ENCODE measurements at regions of chr7 and their contacts with region 1.

Region 1: DNA sequence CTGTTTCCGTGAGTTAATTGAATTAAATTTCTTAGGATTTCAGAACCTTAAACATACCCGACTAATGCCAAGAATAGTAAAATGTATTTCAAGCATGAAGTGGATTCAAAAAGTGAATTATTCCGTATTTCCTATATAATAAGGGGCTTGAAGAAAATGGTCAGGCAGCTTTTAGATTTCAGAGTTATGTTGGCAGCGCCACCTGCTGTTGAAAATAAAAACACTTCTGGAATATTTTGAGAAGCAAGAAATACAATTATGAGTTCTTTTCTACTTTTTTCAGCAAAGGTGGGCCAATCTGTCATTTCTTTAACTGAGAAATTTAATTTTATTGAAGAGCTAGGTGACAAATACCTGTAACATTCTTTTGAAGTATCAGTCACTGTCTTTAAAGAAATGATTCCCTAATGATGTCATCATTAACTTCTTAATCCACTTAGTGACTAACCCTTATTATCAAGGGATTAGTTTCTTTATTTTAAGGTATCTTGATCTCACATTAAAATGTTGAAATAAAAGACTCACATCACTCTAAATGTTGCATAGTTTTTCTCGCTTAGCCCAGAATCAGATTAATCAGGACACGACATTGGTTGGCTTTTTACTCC is 36.6 kb upstream of the AGR3 start:
- DNase-seq: peak in 1 of 2 experiments; percentile 45
- H3K4me3 ChIP-seq: no peak overlapping the region
- H3K27ac ChIP-seq: no peak overlapping the region
- H3K4me1 ChIP-seq: peaks cover 86% of the 10 kb centered on the region
- H3K27me3 ChIP-seq: no peaks in the 10 kb centered on the region
- CTCF ChIP-seq: peak; percentile 96

Region 2: DNA sequence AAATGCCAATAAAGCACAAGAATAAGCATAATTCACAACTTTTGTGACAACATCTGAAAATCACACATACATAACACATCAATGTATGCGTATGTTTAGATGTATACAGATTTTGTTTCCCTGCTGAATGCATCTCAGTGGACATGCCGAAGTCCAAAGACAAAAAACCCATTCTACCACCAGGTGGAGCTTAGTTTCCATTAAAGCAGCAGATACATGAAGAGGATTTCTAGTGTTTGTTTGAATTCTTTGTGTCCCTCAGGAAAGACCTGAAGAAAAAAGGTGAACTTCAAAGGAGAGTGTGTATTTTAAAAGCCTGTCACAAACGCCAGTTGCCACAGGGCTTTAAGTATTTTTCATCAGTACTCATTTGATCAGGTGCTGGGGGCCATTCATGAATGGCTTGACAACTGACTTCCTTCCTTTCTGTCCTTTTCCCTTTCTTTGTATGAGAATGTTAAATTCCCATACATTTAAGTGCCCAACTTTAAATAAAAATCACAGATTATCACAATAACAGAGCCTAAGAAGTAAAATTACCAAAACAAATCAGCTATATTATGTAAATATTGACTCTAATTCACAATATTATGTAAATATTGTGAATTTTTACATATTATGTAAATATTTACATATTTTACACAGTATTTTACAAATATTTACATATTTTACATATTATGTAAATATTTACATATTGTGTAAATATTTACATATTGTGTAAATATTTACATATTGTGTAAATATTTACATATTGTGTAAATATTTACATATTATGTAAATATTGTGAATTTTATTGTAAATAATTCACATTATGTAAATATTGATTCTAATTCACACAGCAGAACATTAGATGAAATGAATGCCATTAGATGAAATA is 840.1 kb before region 1 on chr7:
- CTCF ChIA-PET with region 1: no interaction called
- POLR2A ChIA-PET with region 1: no interaction called
- intact Hi-C with region 1: loop called (anchors 5 kb)
- DNase-seq: peak; percentile 55 to 69
- H3K4me3 ChIP-seq: no peak overlapping the region
- H3K27ac ChIP-seq: no peak overlapping the region
- H3K4me1 ChIP-seq: no peaks in the 10 kb centered on the region
- H3K27me3 ChIP-seq: no peaks in the 10 kb centered on the region
- CTCF ChIP-seq: peak; percentile 93

Region 3: GRCh38 chr7:16223963-16224707 is 694.3 kb before region 1 on chr7:
- CTCF ChIA-PET with region 1: no interaction called
- POLR2A ChIA-PET with region 1: no interaction called
- intact Hi-C with region 1: no loop called
- DNase-seq: no peak
- H3K4me3 ChIP-seq: no peak overlapping the region
- H3K27ac ChIP-seq: no peak overlapping the region
- H3K4me1 ChIP-seq: no peaks in the 10 kb centered on the region
- H3K27me3 ChIP-seq: no peaks in the 10 kb centered on the region
- CTCF ChIP-seq: no peak

Region 4: GRCh38 chr7:16695621-16696237 is 222.7 kb before region 1 on chr7:
- CTCF ChIA-PET with region 1: interaction called, 4 read pairs
- POLR2A ChIA-PET with region 1: no interaction called
- intact Hi-C with region 1: loop called (anchors 1 kb)
- DNase-seq: peak; percentile 37 to 63
- H3K4me3 ChIP-seq: no peak overlapping the region
- H3K27ac ChIP-seq: no peak overlapping the region
- H3K4me1 ChIP-seq: no peaks in the 10 kb centered on the region
- H3K27me3 ChIP-seq: no peaks in the 10 kb centered on the region
- CTCF ChIP-seq: peak; percentile 89

Region 5: GRCh38 chr7:16822029-16822428 is 96.4 kb before region 1 on chr7:
- CTCF ChIA-PET with region 1: no interaction called
- POLR2A ChIA-PET with region 1: no interaction called
- intact Hi-C with region 1: no loop called
- DNase-seq: no peak
- H3K4me3 ChIP-seq: no peak overlapping the region
- H3K27ac ChIP-seq: no peak overlapping the region
- H3K4me1 ChIP-seq: peaks cover 13% of the 10 kb centered on the region
- H3K27me3 ChIP-seq: no peaks in the 10 kb centered on the region
- CTCF ChIP-seq: no peak

Region 6: DNA sequence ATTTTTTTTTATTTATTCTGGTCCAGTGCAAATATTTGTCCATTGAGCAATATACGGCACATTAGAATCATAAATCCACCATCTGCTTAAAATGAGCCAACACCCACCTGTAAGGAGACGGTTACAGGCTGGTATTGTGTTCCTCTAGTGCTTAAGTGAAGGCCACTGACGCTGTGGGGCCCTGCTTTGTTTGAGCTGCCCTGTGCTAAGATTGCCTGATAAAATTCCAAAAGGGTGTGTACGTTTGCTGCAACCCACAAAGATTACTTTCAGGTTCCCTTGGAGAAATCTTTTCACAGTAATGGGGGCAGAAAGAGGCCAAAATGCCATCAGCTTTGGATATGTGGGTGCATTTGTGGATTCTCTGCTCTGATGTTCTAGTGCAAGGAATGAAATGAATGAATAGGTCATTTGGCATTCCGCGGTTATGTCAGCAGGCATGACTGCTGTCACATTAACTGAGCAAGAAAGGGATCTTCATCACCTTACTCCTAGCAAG is 71.0 kb before region 1 on chr7:
- CTCF ChIA-PET with region 1: interaction called, 4 read pairs
- POLR2A ChIA-PET with region 1: no interaction called
- intact Hi-C with region 1: loop called (anchors 1 kb)
- DNase-seq: peak; percentile 90 to 100
- H3K4me3 ChIP-seq: peak overlapping the region; percentile 39; the same call in 1 of the 2 replicates
- H3K27ac ChIP-seq: peak overlapping the region; percentile 87
- H3K4me1 ChIP-seq: peaks cover 59% of the 10 kb centered on the region
- H3K27me3 ChIP-seq: no peaks in the 10 kb centered on the region
- CTCF ChIP-seq: no peak

Region 7: DNA sequence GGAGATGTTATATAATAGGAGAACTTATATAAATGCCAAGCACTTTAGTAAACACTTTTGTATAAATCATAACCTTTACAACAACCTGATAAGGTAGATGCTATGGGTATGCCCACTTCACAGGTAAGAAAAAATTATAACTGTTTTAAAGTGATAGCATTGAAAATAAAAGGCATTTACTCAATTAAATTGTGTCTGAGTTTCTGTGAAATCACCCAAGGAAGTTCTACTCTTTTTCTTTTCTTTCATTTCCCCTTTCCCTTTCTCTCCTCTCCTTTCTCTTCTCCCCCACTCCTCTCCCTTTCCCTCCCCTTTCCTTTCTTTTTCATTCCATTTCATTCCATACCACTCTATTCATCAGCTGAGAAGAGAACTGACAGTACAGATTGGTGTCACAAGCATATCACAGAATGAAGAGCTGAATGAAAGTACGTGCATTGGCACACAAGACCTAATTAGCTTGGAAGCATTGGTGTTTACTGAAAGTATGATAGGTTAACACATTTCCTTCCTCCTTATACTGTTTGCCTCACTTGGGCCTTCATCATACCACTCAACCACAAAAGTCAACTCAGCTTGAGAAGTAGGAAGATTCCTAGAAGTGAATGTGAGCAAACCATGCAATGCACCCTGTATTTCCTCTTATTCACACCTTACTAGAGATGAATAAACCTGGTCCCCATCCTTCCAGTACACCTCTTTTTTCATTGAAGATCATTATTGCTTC is 81.3 kb after region 1 on chr7:
- CTCF ChIA-PET with region 1: no interaction called
- POLR2A ChIA-PET with region 1: no interaction called
- intact Hi-C with region 1: no loop called
- DNase-seq: no peak
- H3K4me3 ChIP-seq: no peak overlapping the region
- H3K27ac ChIP-seq: no peak overlapping the region
- H3K4me1 ChIP-seq: no peaks in the 10 kb centered on the region
- H3K27me3 ChIP-seq: no peaks in the 10 kb centered on the region
- CTCF ChIP-seq: no peak

Region 8: GRCh38 chr7:17041324-17041723 is 122.9 kb after region 1 on chr7:
- CTCF ChIA-PET with region 1: no interaction called
- POLR2A ChIA-PET with region 1: interaction called, 3 read pairs
- intact Hi-C with region 1: loop called (anchors 2 kb)
- DNase-seq: peak in 1 of 2 experiments; percentile 97
- H3K4me3 ChIP-seq: peak overlapping the region; percentile 11; the same call in 1 of the 2 replicates
- H3K27ac ChIP-seq: peak overlapping the region; percentile 97
- H3K4me1 ChIP-seq: peaks cover 83% of the 10 kb centered on the region
- H3K27me3 ChIP-seq: no peaks in the 10 kb centered on the region
- CTCF ChIP-seq: no peak

Region 9: GRCh38 chr7:17599733-17600685 is 681.6 kb after region 1 on chr7:
- CTCF ChIA-PET with region 1: no interaction called
- POLR2A ChIA-PET with region 1: no interaction called
- intact Hi-C with region 1: loop called (anchors 1 kb)
- DNase-seq: peak; percentile 58 to 99
- H3K4me3 ChIP-seq: no peak overlapping the region
- H3K27ac ChIP-seq: peak overlapping the region; percentile 82
- H3K4me1 ChIP-seq: peaks cover 39% of the 10 kb centered on the region
- H3K27me3 ChIP-seq: no peaks in the 10 kb centered on the region
- CTCF ChIP-seq: no peak

Region 10: DNA sequence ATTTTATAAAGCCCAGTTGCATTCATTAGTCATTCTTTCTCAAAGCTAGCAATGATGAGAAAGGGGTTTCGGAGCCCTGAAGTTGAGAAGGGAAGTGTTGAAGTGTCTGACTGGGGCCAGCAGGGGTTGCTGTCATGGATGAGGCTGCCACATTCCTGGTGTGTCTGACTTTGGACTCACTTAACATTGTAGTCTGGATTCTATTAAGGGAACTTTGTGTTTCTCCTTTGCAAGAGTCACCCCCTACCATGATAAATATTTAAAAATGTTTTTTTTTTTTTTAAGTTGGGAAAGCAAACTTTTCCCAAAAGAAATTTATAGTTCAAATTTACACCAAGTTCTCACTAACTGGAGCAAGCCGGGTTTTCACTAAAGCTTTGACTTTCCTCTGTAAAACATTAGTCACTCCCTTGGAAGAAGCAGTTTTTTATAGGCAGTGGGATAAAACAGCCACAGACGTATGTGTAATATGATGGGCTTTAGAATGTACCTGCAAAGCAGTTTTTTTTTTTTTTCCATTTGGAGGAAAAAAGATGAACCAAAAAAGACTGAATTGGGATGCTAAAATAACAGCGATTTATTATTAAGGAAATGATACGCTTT is 1955.4 kb after region 1 on chr7:
- CTCF ChIA-PET with region 1: no interaction called
- POLR2A ChIA-PET with region 1: no interaction called
- intact Hi-C with region 1: no loop called
- DNase-seq: no peak
- H3K4me3 ChIP-seq: no peak overlapping the region
- H3K27ac ChIP-seq: no peak overlapping the region
- H3K4me1 ChIP-seq: no peaks in the 10 kb centered on the region
- H3K27me3 ChIP-seq: no peaks in the 10 kb centered on the region
- CTCF ChIP-seq: no peak; the same call in 1 of the 2 replicates